Ovary (tissue), 10 donors: ENCODE measurements at regions of chr7 and their contacts with region 1.

Region 1: DNA sequence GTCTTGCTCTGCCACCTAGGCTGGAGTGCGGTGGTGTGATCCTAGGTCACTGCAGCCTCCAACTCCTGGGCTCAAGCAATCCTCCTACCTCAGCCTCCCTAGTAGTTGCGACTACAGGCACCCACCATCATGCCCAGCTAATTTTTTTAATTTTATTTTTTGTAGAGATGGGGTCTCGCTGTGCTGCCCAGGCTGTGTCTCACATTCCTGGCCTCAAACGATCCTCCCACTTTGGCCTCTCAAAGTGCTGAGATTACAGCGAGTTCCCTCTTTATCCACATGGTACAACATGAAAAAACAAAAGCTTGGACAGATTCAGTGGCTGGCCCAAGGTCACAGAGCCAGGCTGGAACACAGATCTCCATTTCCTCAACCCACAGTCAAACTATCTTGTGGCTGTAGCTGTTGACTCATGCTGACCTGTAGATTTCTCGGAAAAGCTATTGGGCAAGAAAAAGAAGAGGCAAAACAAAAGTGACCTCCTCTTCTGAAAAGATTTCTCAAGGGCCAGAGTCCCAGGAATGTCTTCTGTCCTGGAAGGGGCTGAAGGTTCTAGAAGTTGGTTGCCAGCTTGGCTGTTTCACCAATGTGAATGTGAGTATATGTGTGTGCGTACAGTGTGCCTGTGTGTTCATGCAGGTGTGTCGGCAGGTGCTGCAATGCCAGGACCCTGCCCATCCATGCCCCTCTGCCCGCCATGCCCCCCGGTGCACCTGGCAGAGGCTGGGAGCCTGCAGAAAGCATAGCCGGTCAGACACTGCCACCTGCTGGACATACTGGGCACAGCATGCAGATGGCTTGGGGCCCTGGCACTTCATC is 28.4 kb downstream of the TMEM130 start:
- DNase-seq: peak; percentile 26 to 64 (median 42)
- H3K4me3 ChIP-seq: no peak overlapping the region
- H3K27ac ChIP-seq: no peak overlapping the region
- H3K4me1 ChIP-seq: peaks cover 1% of the 10 kb centered on the region
- H3K27me3 ChIP-seq: no peaks in the 10 kb centered on the region
- CTCF ChIP-seq: peak; percentile 32 to 93 (median 67)
- EP300 ChIP-seq: no peak
- POLR2A ChIP-seq: no peak

Region 2: GRCh38 chr7:98434095-98434494 is 407.3 kb before region 1 on chr7:
- intact Hi-C with region 1: loop called (anchors 5 to 10 kb)
- DNase-seq: no peak
- H3K4me3 ChIP-seq: no peak overlapping the region
- H3K27ac ChIP-seq: no peak overlapping the region
- H3K4me1 ChIP-seq: no peaks in the 10 kb centered on the region
- H3K27me3 ChIP-seq: no peaks in the 10 kb centered on the region
- CTCF ChIP-seq: no peak
- EP300 ChIP-seq: no peak
- POLR2A ChIP-seq: no peak

Region 3: DNA sequence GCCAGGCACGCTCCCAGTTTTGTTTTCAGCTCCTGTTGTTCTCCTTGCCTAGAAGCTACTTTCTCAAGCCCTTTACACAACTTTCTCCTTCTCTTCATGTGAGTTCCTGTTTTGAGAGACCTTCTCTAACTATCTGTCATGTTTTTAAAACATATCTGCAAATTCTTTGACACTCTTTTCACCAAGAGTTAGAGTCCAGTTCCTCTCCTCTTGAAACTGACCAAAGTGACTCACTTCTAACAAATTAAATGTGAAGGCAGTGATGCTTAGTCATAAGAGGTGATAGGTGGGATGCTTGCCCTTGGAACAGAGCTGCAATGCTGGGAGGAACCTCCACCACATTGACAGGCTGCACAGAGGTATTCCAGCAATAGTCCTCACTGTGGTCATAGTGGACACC is 800.6 kb after region 1 on chr7:
- intact Hi-C with region 1: no loop called
- DNase-seq: no peak
- H3K4me3 ChIP-seq: no peak overlapping the region
- H3K27ac ChIP-seq: no peak overlapping the region
- H3K4me1 ChIP-seq: no peaks in the 10 kb centered on the region
- H3K27me3 ChIP-seq: no peaks in the 10 kb centered on the region
- CTCF ChIP-seq: no peak
- EP300 ChIP-seq: no peak
- POLR2A ChIP-seq: no peak